Vagina (tissue), 2 donors: ENCODE measurements at regions of chr5 and their contacts with region 1.

Region 1: DNA sequence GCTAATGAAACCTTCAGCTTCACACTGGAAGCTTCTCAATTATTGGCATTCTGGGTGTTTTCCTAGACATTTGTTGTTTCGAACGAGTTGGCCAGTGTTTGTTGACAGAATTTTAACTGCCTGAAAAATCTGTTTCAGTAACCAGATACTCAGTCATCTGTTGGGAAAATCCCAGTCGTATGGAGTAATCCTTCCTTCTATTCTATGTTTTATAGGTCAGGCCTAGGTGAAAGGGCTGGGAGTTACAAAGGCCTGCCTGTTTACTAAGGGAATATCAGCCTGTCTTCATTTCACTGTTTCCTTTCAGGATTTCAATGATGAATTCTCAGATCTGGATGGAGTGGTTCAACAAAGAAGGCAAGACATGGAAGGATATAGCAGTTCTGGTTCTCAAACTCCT is 59.9 kb downstream of the GRAMD2B start:
- DNase-seq: no peak
- H3K4me3 ChIP-seq: no peak overlapping the region
- H3K27ac ChIP-seq: peak overlapping the region; percentile 73
- H3K4me1 ChIP-seq: peaks cover 21% of the 10 kb centered on the region
- H3K27me3 ChIP-seq: no peaks in the 10 kb centered on the region
- CTCF ChIP-seq: no peak
- POLR2A ChIP-seq: no peak

Region 2: GRCh38 chr5:126443374-126443851 is 39.7 kb before region 1 on chr5:
- intact Hi-C with region 1: no loop called
- DNase-seq: no peak
- H3K4me3 ChIP-seq: no peak overlapping the region
- H3K27ac ChIP-seq: no peak overlapping the region
- H3K4me1 ChIP-seq: peaks cover 18% of the 10 kb centered on the region
- H3K27me3 ChIP-seq: no peaks in the 10 kb centered on the region
- CTCF ChIP-seq: no peak
- POLR2A ChIP-seq: no peak

Region 3: GRCh38 chr5:126519634-126520592 is 36.8 kb after region 1 on chr5:
- intact Hi-C with region 1: loop called (anchors 5 kb)
- DNase-seq: peak in 1 of 2 donors; percentile 90
- H3K4me3 ChIP-seq: peak overlapping the region in 1 of 2 donors; percentile 15
- H3K27ac ChIP-seq: peak overlapping the region; percentile 84
- H3K4me1 ChIP-seq: peaks cover 45% of the 10 kb centered on the region
- H3K27me3 ChIP-seq: no peaks in the 10 kb centered on the region
- CTCF ChIP-seq: no peak
- POLR2A ChIP-seq: no peak

Region 4: GRCh38 chr5:126568206-126568755 is 85.1 kb after region 1 on chr5:
- intact Hi-C with region 1: no loop called
- DNase-seq: no peak
- H3K4me3 ChIP-seq: no peak overlapping the region
- H3K27ac ChIP-seq: no peak overlapping the region
- H3K4me1 ChIP-seq: no peaks in the 10 kb centered on the region
- H3K27me3 ChIP-seq: no peaks in the 10 kb centered on the region
- CTCF ChIP-seq: no peak
- POLR2A ChIP-seq: no peak

Region 5: DNA sequence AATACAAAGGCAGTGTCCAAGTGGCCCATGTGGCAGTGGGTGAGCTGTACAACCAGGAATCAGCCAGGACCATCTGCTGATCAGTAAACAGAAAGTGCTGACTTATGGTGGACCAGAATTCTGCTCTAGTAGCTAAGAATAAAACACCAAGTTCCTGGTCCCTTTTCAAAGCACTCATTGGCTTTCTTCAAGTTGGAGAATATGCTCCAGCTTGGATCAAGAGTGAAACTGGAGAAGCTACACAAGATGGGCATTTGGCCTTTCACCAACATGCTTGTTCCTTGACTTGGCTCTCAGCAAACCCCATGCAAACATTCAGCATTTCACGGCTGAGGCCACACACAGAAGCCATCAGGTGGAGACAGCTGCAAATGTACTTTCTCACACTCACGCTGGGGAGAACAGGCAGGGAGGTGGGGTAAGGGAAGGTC is 515.1 kb after region 1 on chr5:
- intact Hi-C with region 1: no loop called
- DNase-seq: no peak
- H3K4me3 ChIP-seq: no peak overlapping the region
- H3K27ac ChIP-seq: no peak overlapping the region
- H3K4me1 ChIP-seq: no peaks in the 10 kb centered on the region
- H3K27me3 ChIP-seq: no peaks in the 10 kb centered on the region
- CTCF ChIP-seq: no peak
- POLR2A ChIP-seq: no peak